Upper lobe of right lung (tissue), 1 donor: ENCODE measurements at regions of chr1 and their contacts with region 1.

Region 1: DNA sequence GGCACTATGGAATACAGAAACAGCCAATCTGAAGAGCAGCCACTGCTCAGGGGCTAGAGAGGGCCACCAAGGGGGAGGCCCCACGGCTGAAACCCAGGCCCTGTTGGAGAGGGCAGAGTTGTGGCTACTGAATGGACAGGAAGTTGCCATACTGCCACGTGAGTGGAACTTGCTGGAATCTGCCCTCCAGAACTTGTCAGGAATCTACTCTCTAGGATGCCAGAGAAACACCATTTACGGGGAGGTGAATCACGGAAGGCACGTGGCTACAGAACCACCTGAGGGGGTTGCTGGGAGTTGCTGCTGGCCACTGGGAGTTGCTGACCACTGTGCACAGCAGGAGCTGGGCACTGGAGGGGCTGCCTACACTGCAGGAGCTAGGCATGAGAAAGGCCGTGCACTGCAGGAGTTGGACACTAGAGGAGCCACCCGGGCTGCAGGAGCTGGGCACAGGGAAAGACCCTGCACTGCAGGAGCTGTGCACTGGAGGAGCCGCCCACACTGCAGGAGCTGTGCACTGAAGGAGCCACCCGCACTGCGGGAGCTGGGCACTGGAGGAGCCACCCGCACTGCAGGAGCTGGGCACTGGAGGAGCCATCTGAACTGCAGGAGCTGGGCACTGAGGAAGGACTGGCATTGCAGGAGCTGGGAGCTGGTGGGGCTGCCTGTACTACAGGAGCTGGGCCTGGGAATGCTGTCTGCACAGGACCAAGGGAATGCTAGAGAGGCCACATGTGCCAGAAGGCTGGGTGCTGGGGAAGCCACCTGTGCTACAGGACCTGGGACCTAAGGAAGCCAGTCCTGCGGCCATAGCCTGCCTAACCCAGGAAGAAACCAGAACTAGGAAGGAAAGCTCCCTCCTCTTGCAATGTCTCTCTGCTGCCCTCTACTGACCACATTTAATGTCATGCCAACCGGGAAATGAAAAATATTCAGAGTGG is 343.4 kb downstream of the MATN1 start:
- DNase-seq: peak; percentile 67
- ATAC-seq: peak; percentile 84
- H3K4me3 ChIP-seq: no peak overlapping the region
- H3K27ac ChIP-seq: no peak overlapping the region
- H3K4me1 ChIP-seq: peaks cover 6% of the 10 kb centered on the region
- H3K27me3 ChIP-seq: peaks cover 24% of the 10 kb centered on the region
- CTCF ChIP-seq: peak; percentile 84

Region 2: DNA sequence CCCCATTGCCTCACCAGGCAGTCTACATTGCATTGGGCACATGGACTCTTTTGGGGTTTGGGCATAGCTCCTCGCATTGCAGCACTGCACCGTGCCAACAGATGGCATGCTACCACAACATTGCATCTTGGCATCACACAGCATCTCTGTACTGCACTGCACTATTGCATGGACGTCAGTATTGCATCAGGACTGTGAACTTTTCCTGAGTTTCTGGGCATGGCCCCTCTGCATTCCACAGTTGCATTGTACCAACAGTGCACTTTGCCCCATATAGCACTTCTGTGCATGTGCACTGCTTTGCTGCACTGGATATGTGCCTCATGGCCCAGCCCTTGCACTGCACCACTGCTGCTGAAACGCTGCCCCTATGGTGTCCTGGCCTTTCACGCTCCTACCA is 1134.1 kb before region 1 on chr1:
- intact Hi-C with region 1: loop called (anchors 10 kb)
- DNase-seq: no peak
- ATAC-seq: peak; percentile 57
- H3K4me3 ChIP-seq: no peak overlapping the region
- H3K27ac ChIP-seq: no peak overlapping the region
- H3K4me1 ChIP-seq: no peaks in the 10 kb centered on the region
- H3K27me3 ChIP-seq: no peaks in the 10 kb centered on the region
- CTCF ChIP-seq: peak; percentile 29

Region 3: DNA sequence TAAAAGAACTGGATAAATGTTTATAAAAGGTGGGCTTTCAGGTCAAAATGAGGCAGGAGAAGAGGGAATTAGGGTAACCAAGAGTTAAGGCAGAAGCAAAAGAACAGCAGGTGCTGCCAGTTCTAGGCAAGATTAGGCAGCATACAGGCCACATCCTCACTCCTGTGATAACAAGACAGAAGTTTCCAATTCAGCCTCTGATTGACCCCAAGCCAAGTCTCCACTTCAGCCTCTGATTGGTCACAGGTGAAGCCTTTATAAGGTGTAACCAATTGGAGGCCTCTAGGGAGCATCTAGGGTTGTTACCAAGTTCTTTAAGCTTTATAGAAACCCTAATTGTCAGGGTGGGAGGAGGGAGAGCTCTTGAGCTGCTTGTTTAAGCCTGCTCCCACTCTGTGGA is 182.6 kb after region 1 on chr1:
- intact Hi-C with region 1: no loop called
- DNase-seq: no peak
- ATAC-seq: no peak
- H3K4me3 ChIP-seq: no peak overlapping the region
- H3K27ac ChIP-seq: no peak overlapping the region
- H3K4me1 ChIP-seq: no peaks in the 10 kb centered on the region
- H3K27me3 ChIP-seq: no peaks in the 10 kb centered on the region
- CTCF ChIP-seq: no peak